ENCODE measurements at regions of chr3 and their contacts with region 1.

Region 1: GRCh38 chr3:114584734-114585371 is 291.0 kb downstream of the TIGIT start:
- DNase-seq: no peak
- ATAC-seq: no peak
- H3K4me3 ChIP-seq: no peak overlapping the region
- H3K27ac ChIP-seq: no peak overlapping the region
- H3K4me1 ChIP-seq: peaks cover 7% of the 10 kb centered on the region
- H3K27me3 ChIP-seq: no peaks in the 10 kb centered on the region; a peak in 1 of 5 replicates
- CTCF ChIP-seq: no peak
- EP300 ChIP-seq: no peak
- POLR2A ChIP-seq: no peak
- RAD21 ChIP-seq: no peak

Region 2: DNA sequence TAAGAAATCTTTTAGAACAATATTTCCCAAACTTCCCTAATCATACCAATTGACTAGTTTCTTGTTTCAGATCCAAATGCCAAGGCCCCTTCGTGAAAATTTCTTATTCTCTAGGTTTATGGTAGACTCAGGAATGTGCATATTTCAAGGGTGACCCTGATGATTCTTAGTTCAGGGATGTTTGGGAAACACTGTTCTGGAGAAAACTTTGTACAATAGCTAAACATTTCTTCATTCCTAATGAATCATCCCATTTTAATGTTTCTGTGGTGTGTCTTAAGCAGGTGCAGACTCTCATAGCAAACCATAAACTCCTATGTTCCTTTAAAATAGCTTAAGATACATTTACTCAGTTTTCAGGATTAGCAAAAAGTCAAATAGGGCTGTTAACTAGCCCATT is 23.4 kb after region 1 on chr3:
- CTCF ChIA-PET with region 1: no interaction called
- POLR2A ChIA-PET with region 1: no interaction called
- in situ Hi-C with region 1: no loop called
- intact Hi-C with region 1: loop called (anchors 1 kb)
- DNase-seq: no peak
- ATAC-seq: no peak
- H3K4me3 ChIP-seq: no peak overlapping the region
- H3K27ac ChIP-seq: no peak overlapping the region
- H3K4me1 ChIP-seq: no peaks in the 10 kb centered on the region
- H3K27me3 ChIP-seq: no peaks in the 10 kb centered on the region
- CTCF ChIP-seq: no peak
- EP300 ChIP-seq: no peak
- POLR2A ChIP-seq: no peak
- RAD21 ChIP-seq: no peak